ENCODE measurements at regions of chr10 and their contacts with region 1.

Region 1: GRCh38 chr10:15097011-15097812 is at the start of gene RPP38:
- DNase-seq: peak; percentile 95 to 98 (median 96)
- H3K4me3 ChIP-seq: peak within 1 kb of the TSS; percentile 69 to 100 (median 95)
- H3K27ac ChIP-seq: peak within 1 kb of the TSS; percentile 90 to 100 (median 98)
- H3K27me3 ChIP-seq: no peaks in the 10 kb centered on the region
- CTCF ChIP-seq: peak in 19 of 56 donors; percentile 6 to 48 (median 19)
- total RNA-seq, gene RPP38: 4.9 to 13.9 (median 9.2) TPM

Region 2: DNA sequence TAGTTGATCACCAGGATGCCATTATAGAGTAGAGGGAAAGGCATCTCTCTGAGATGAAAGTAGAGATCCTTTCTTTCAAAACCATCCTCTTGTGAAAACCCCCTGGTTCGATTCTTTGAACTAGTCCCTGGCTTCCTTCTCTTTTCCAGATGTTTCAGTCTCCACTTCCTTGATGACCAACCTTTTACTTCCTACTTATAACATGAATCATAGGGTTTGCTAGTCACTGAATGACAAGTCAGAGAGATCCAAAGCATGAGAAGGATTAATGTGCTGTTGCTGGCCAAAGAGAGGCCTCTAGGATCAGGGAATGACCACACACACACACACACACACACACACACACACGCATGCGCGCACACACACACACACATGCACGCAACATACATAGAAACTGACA is 605.4 kb before region 1 on chr10:
- intact Hi-C with region 1: loop called in 1 of 2 experiments (anchors 10 kb)
- DNase-seq: no peak
- H3K4me3 ChIP-seq: no peak overlapping the region
- H3K27ac ChIP-seq: no peak overlapping the region
- H3K27me3 ChIP-seq: no peaks in the 10 kb centered on the region
- CTCF ChIP-seq: no peak

Region 3: DNA sequence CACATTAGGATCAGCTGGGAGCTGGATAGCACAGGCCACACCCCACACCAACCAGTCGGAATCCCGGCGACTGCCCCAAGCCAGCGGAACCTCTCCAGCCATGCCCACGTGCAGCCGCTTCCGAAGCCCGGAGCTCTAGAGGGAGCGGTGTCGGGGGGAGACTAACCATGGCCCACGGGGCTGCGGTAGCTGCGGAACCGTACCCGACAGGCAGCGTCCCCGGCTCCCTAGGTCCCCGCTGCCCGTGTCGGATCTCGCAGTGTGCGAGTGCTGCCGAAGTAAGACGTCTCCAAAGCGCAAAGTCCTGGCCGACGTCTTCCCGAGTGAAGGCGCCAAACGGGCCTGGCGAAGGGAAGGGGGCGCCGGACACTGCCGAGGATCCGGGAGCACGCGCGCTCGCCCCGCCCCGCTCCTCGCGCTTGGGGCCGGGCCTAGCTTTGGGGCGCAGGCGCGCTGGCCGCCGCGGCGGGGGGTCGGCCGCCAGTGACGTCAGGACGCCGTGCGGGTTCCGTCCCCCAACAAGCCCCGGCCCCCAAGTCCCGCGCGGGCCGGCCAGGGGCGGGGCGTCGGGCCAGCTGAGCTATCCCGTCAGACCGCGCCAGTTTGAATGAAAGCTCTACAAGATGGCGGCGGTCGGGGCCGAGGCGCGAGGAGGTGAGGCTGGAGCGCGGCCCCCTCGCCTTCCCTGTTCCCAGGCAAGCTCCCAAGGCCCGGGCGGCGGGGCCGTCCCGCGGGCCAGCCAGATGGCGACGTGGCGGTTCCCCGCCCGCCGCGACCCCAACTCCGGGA is 218.8 kb before region 1 on chr10 and contains the start of gene SUV39H2:
- intact Hi-C with region 1: loop called (anchors 2 to 10 kb)
- DNase-seq: peak; percentile 89 to 98 (median 95)
- H3K4me3 ChIP-seq: peak within 1 kb of the TSS; percentile 67 to 99 (median 94)
- H3K27ac ChIP-seq: peak within 1 kb of the TSS; percentile 2 to 97 (median 92)
- H3K27me3 ChIP-seq: no peaks in the 10 kb centered on the region
- CTCF ChIP-seq: peak in 47 of 56 donors; percentile 12 to 71 (median 45)
- total RNA-seq, gene SUV39H2: 8.9 to 25.2 (median 16.2) TPM

Region 4: DNA sequence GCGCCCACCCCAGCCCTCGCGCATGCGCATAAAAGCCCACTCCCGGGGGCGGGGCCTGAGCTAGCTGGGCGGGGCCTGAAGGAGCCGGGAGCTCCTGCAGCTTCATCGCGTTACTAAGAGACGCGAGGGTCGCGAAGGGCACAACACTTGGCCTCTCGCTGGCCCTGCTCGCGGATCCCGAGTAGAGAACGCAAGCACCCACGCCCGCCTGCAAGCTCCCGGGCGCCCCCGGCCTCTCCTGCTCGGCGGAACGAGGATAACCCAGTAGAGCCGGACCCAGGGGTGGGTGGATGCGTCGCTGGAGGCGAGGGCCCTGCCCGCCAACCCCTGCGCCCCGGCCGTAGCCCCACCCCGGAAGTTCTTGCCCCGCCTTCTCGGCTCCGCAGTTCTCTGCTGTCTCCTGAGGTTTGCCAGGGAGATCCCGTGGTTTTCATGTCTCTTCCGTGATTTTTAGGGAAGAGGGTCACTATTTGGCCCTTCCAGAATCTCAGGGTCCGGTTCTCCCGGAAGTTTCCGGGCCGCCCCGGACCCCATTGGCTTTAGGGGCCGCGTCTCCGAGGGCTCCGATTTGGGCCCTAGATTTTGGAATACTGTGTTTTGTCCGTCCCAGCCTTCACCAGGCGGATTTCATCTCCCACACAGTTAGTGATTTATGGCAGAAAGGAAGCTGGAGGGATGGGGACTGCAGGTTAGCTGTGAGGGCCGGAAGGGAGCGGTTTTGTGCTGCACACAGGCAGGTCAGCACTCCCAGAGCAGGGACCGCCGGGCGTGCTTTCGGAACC is 137.7 kb before region 1 on chr10 and contains the start of gene MEIG1:
- intact Hi-C with region 1: loop called (anchors 5 to 10 kb)
- DNase-seq: peak; percentile 90 to 98 (median 96)
- H3K4me3 ChIP-seq: peak within 1 kb of the TSS; percentile 64 to 98 (median 86)
- H3K27ac ChIP-seq: peak within 1 kb of the TSS; percentile 82 to 99 (median 96)
- H3K27me3 ChIP-seq: no peaks in the 10 kb centered on the region
- CTCF ChIP-seq: peak in 13 of 56 donors; percentile 4 to 45 (median 15)
- total RNA-seq, gene MEIG1: 0.68 to 5.1 (median 1.8) TPM in 75 of 120 experiments, not detected in the others

Region 5: GRCh38 chr10:15209827-15210509 is 112.8 kb after region 1 on chr10:
- intact Hi-C with region 1: no loop called
- DNase-seq: peak; percentile 74 to 94 (median 88)
- H3K4me3 ChIP-seq: peak overlapping the region in 7 of 59 donors; percentile 2 to 26 (median 15)
- H3K27ac ChIP-seq: peak overlapping the region in 34 of 59 donors; percentile 8 to 75 (median 40)
- H3K27me3 ChIP-seq: no peaks in the 10 kb centered on the region
- CTCF ChIP-seq: peak; percentile 77 to 98 (median 91)

Region 6: GRCh38 chr10:15370856-15371701 is 273.9 kb after region 1 on chr10 and contains the start of gene FAM171A1:
- intact Hi-C with region 1: loop called in 1 of 2 experiments (anchors 10 kb)
- DNase-seq: peak in 8 of 10 donors; percentile 24 to 69 (median 62)
- H3K4me3 ChIP-seq: peak within 1 kb of the TSS; percentile 52 to 92 (median 80)
- H3K27ac ChIP-seq: peak within 1 kb of the TSS in 58 of 59 donors; percentile 40 to 94 (median 85)
- H3K27me3 ChIP-seq: no peaks in the 10 kb centered on the region
- CTCF ChIP-seq: peak in 20 of 56 donors; percentile 6 to 56 (median 22)
- total RNA-seq, gene FAM171A1: 79.2 to 197 (median 110) TPM